Natural killer cell (primary cell): ENCODE measurements at regions of chr1 and their contacts with region 1.

Region 1: DNA sequence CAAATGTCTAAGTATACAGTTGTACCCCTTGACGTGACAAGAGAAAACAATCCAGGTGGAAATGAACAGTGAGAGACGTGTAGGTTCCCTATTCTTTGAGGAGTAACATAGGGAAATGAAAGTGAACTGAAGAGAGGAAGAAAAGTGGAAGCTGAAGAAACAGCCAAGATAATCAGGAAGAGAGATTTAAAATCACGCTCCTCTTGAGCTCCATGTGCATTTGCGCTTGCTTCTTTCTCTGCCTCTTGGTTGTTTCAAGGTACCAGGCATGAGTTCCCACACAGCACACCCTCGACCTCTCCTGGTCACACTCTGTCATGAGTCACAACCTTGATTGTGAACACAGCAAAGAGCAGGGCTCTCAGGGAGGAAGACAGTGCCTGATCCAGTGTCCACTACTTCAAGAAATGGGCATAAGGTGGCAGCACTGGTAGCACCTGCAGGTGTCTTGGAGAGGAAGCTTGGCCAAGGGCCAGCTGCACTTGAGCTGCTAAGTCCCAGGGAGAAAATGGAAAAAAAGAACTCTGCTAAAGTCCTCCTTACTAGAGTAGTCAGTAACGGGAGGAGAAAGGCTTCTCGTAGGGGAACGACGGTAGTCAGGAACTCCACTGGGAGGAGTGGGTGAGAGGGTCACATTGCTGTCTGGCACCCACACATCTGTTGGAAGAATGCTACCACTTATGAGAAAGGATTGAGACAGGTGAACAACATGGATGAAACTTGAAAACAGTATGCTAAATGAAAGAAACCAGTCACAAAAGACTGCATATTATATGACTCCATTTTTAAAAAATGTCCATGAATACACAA is 18.3 kb upstream of the ARID1A start:
- DNase-seq: peak; percentile 22 to 84
- ATAC-seq: peak; percentile 88 to 99 (median 98)
- H3K4me3 ChIP-seq: no peak overlapping the region
- H3K4me3 Mint-ChIP-seq: peak overlapping the region; percentile 71
- H3K27ac ChIP-seq: peak overlapping the region; percentile 35
- H3K27ac Mint-ChIP-seq: peak overlapping the region; percentile 30 to 85
- H3K4me1 ChIP-seq: peaks cover 6% of the 10 kb centered on the region
- H3K4me1 Mint-ChIP-seq: peaks cover 11 to 12% of the 10 kb centered on the region in 2 donors
- H3K27me3 ChIP-seq: no peaks in the 10 kb centered on the region
- H3K27me3 Mint-ChIP-seq: no peaks in the 10 kb centered on the region
- CTCF ChIP-seq: peak; percentile 39

Region 2: GRCh38 chr1:26602378-26602959 is 75.0 kb before region 1 on chr1:
- intact Hi-C with region 1: loop called (anchors 1 kb)
- DNase-seq: peak in 1 of 2 donors; percentile 86
- ATAC-seq: peak; percentile 49 to 83 (median 69)
- H3K4me3 ChIP-seq: no peak overlapping the region
- H3K4me3 Mint-ChIP-seq: no peak overlapping the region
- H3K27ac ChIP-seq: no peak overlapping the region
- H3K27ac Mint-ChIP-seq: no peak overlapping the region
- H3K4me1 ChIP-seq: no peaks in the 10 kb centered on the region
- H3K4me1 Mint-ChIP-seq: peaks cover 9% of the 10 kb centered on the region in 2 donors
- H3K27me3 ChIP-seq: no peaks in the 10 kb centered on the region
- H3K27me3 Mint-ChIP-seq: peaks cover 0 to 5% of the 10 kb centered on the region in 2 donors
- CTCF ChIP-seq: peak; percentile 98

Region 3: DNA sequence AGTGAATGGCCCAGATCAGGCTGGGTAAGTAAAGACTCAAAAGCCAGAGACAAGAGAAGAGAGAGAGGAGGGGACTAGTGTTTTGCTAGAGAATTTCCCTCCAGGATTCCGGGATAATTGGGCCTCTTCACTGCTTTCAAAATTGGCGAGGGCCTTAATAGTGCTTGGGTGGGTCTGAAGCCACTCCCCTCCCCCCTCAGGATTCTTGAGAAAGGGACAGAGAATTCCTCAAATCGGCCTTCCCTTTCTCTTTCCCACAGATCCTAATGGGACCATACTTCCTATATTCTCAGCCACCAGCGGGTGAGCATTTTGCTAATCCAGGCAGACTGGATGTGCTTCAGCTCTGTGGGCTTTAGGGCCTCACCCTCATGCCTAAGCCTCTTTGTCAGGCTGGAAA is 197.4 kb after region 1 on chr1:
- intact Hi-C with region 1: no loop called
- DNase-seq: no peak
- ATAC-seq: no peak
- H3K4me3 ChIP-seq: no peak overlapping the region
- H3K4me3 Mint-ChIP-seq: no peak overlapping the region
- H3K27ac ChIP-seq: no peak overlapping the region
- H3K27ac Mint-ChIP-seq: peak overlapping the region in 1 of 2 donors; percentile 35
- H3K4me1 ChIP-seq: no peaks in the 10 kb centered on the region
- H3K4me1 Mint-ChIP-seq: no peaks in the 10 kb centered on the region
- H3K27me3 ChIP-seq: no peaks in the 10 kb centered on the region
- H3K27me3 Mint-ChIP-seq: no peaks in the 10 kb centered on the region
- CTCF ChIP-seq: no peak